Mammary epithelial cell (primary cell): ENCODE measurements at regions of chr13 and their contacts with region 1.

Region 1: DNA sequence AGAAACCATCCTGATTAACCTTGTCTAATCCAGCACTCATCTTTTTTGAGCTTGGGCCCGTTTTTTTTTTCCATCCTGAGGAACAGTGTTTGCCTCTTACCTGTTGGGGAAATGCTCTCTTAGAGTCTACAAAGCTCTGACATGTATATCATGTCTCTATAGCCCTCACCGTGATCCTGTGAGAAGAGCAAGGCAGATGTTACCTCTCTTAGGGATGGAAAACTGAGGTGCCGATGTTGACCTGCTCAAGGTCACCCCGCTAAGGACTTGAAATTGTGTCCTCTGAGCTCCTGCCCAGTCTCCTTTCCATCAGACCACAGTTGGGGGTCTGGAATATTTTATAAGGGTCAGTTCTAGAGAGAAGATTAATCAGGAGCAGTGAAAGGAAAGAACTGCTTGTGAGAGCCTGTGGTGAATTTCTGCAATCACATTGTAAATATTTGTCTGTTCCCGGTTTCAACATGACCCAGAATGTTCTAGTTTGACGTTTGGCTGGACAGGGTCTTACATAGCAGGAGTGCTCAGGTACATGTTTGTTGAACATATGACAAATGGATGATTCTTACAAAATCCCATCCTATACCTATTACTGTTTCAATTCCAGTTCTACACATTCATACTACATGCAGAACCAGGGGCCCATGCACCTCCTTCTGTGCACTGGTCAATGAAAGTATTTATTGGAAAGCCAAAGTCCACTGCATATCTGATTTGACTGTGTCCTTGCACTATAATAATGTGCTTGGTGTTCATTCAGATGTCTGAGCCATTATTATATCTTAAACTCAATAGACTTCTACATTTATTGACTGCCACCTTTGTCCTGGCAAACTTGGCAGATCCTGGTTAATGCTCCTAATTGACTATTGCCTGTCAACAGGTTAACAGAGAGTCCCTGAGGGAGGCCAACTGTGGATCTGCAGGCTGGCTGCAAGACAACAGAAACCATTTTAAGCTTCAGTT is 12.1 kb downstream of the SLC25A15 start:
- DNase-seq: no peak
- H3K4me3 ChIP-seq: no peak overlapping the region
- H3K27ac ChIP-seq: no peak overlapping the region
- H3K4me1 ChIP-seq: no peaks in the 10 kb centered on the region
- H3K27me3 ChIP-seq: no peaks in the 10 kb centered on the region
- CTCF ChIP-seq: no peak

Region 2: DNA sequence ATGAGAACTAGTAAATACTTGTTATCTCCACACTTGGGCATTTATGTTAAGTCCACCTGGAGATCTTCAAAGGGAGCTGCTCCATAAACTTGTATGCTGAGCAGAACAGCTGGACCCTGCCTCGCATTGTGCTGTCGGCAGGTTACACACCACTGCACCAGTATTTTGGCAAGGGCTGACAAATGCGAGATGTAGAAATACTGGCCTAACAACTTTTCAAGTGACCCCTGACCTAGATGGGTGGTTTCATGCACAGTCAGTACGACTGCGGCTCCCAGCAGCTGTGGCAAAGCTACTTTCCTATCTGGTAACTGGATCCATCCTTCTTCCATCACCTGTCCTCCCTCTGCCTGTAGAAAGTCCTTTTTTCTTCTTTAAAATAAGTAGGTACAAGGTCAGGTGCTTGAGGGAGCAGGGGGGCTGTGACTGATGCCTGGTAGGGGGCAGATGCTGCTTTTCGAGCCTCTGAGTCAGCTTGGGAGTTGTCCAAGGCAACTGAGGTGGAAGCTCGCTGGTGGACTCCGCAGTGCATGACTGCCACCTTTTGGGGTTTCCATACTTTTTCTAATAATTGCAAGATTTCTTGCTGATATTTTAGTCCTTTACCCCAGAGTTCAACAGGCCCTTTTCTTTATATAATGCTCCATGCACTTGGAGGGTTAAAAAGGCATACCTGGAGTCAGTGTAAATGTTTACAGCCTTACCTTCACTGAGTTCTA is 74.6 kb after region 1 on chr13:
- CTCF ChIA-PET with region 1: no interaction called
- dilution Hi-C with region 1: loop called (anchors 5 kb)
- in situ Hi-C with region 1: no loop called
- intact Hi-C with region 1: no loop called
- DNase-seq: no peak
- H3K4me3 ChIP-seq: no peak overlapping the region
- H3K27ac ChIP-seq: no peak overlapping the region
- H3K4me1 ChIP-seq: no peaks in the 10 kb centered on the region
- H3K27me3 ChIP-seq: no peaks in the 10 kb centered on the region
- CTCF ChIP-seq: no peak

Region 3: GRCh38 chr13:41065078-41065477 is 263.5 kb after region 1 on chr13:
- CTCF ChIA-PET with region 1: no interaction called
- dilution Hi-C with region 1: no loop called
- in situ Hi-C with region 1: no loop called
- intact Hi-C with region 1: no loop called
- DNase-seq: no peak
- H3K4me3 ChIP-seq: no peak overlapping the region
- H3K27ac ChIP-seq: no peak overlapping the region
- H3K4me1 ChIP-seq: peaks cover 17% of the 10 kb centered on the region
- H3K27me3 ChIP-seq: no peaks in the 10 kb centered on the region
- CTCF ChIP-seq: no peak